ENCODE measurements at regions of chr4 and their contacts with region 1.

Region 1: GRCh38 chr4:17595471-17596005 is 18.5 kb downstream of the LAP3 start:
- H3K4me3 Mint-ChIP-seq: peak overlapping the region; percentile 23
- H3K27ac Mint-ChIP-seq: peak overlapping the region; percentile 75
- H3K4me1 Mint-ChIP-seq: peaks cover 42% of the 10 kb centered on the region
- H3K27me3 Mint-ChIP-seq: no peaks in the 10 kb centered on the region

Region 2: DNA sequence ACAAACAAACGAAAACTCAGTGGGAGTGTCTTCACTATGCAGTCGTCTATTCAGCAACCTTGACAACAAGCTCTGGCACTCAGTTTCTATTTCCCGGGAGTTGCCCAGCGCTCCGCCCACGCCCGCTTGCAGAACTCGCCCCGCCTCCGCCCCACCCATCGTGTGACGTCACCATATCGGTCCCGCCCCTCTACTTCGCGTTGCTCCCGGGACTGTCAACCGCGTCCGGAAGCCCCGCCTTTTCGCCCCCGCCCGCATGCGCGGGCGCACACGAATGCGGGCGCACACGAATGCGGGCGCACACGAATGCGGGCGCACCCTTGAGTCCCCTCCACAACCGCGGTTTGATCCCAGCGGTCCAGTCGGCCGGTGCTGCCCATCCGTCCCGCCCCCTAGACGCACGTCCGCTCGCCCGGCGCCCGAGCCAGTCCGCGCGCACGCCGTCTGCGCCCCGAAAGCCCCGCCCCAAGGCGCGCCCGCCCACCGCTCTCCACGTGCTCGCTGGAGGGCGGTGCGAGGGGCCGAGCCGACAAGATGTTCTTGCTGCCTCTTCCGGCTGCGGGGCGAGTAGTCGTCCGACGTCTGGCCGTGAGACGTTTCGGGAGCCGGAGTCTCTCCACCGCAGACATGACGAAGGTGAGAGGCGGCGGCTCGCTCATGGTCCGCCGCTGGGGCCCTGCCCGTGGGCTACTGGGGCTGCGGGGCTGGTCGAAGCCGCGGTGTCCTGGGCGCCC is 18.4 kb before region 1 on chr4 and contains the start of gene LAP3:
- intact Hi-C with region 1: loop called (anchors 2 kb)
- H3K4me3 Mint-ChIP-seq: peak within 1 kb of the TSS; percentile 97
- H3K27ac Mint-ChIP-seq: peak within 1 kb of the TSS; percentile 98
- H3K4me1 Mint-ChIP-seq: peaks cover 43% of the 10 kb centered on the region
- H3K27me3 Mint-ChIP-seq: no peaks in the 10 kb centered on the region